ENCODE measurements at regions of chr1 and their contacts with region 1.

Region 1: DNA sequence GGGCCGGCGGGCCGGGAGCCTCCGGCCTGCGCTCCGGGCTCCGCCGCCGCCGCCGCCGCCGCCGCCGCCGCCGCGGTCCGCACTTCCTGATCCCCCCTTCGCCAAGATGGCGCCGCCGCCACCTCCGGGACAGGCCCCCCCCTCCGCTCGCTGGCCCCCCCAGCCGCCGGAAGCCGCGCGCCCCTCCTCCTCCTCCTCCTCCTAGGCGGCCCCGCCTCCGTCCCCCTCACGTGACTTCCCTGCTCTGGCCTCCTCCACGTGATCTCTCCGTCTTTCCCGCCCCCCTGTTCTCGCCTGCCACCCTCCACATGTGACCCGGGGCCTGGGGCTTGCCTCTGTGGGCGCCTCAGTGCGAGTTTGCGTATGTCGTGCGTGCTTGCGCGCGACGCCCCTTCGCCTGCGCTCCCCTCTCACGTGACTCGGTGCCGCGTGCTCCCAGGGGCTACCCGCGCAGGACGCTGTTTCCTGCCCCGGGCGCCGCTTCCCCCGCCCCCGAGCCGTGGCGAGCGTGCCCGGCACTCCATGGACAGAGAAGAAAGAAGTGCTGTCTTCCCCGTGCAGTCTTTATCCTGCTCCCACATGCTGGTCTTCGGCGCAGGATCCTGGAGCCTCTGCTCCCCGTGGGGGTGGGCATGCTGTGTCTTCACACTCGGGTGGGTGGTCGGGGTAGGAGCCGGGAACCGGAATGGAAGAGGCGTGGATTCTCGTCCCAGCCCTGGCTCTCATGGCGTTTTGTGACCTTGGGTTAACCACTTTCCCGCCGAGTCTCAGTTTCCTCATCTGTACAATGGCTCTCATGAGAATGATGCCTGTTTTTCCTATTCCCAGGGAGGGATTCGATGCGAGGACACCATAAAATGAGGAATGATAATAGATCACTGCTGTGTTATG is at the start of gene UBE2Q1:
- DNase-seq: peak; percentile 97
- ATAC-seq: peak; percentile 97
- H3K4me3 ChIP-seq: peak within 1 kb of the TSS; percentile 88
- H3K27ac ChIP-seq: peak within 1 kb of the TSS; percentile 88
- H3K4me1 ChIP-seq: peaks cover 4% of the 10 kb centered on the region
- H3K27me3 ChIP-seq: no peaks in the 10 kb centered on the region
- CTCF ChIP-seq: no peak
- EP300 ChIP-seq: no peak; a peak in 1 of 4 replicates
- POLR2A ChIP-seq: peak; percentile 77
- RAD21 ChIP-seq: no peak
- polyA plus RNA-seq, gene UBE2Q1: 11.0 to 20.3 TPM

Region 2: GRCh38 chr1:154361357-154361756 is 197.5 kb before region 1 on chr1:
- CTCF ChIA-PET with region 1: no interaction called
- POLR2A ChIA-PET with region 1: interaction called, 12 read pairs
- RAD21 ChIA-PET with region 1: no interaction called
- SMC1A ChIA-PET with region 1: no interaction called
- in situ Hi-C with region 1: no loop called
- intact Hi-C with region 1: no loop called
- DNase-seq: no peak
- ATAC-seq: no peak
- H3K4me3 ChIP-seq: no peak overlapping the region
- H3K27ac ChIP-seq: no peak overlapping the region
- H3K4me1 ChIP-seq: no peaks in the 10 kb centered on the region
- H3K27me3 ChIP-seq: peaks cover 0 to 3% of the 10 kb centered on the region in 2 experiments; a peak in 1 of 4 replicates
- CTCF ChIP-seq: no peak
- EP300 ChIP-seq: no peak
- POLR2A ChIP-seq: no peak
- RAD21 ChIP-seq: no peak

Region 3: GRCh38 chr1:154386643-154387352 is 172.0 kb before region 1 on chr1:
- CTCF ChIA-PET with region 1: no interaction called
- POLR2A ChIA-PET with region 1: no interaction called
- RAD21 ChIA-PET with region 1: no interaction called
- SMC1A ChIA-PET with region 1: no interaction called
- in situ Hi-C with region 1: no loop called
- intact Hi-C with region 1: no loop called
- DNase-seq: no peak
- ATAC-seq: peak; percentile 91
- H3K4me3 ChIP-seq: no peak overlapping the region
- H3K27ac ChIP-seq: no peak overlapping the region
- H3K4me1 ChIP-seq: no peaks in the 10 kb centered on the region; the same call in 1 of the 2 replicates
- H3K27me3 ChIP-seq: no peaks in the 10 kb centered on the region
- CTCF ChIP-seq: no peak
- EP300 ChIP-seq: no peak
- POLR2A ChIP-seq: no peak
- RAD21 ChIP-seq: no peak

Region 4: GRCh38 chr1:154578058-154578418 is 19.2 kb after region 1 on chr1:
- CTCF ChIA-PET with region 1: interaction called, 23 read pairs
- POLR2A ChIA-PET with region 1: interaction called, 3 read pairs
- RAD21 ChIA-PET with region 1: no interaction called
- SMC1A ChIA-PET with region 1: interaction called, 8 read pairs
- in situ Hi-C with region 1: no loop called
- intact Hi-C with region 1: no loop called
- DNase-seq: no peak
- ATAC-seq: no peak
- H3K4me3 ChIP-seq: no peak overlapping the region
- H3K27ac ChIP-seq: no peak overlapping the region
- H3K4me1 ChIP-seq: no peaks in the 10 kb centered on the region
- H3K27me3 ChIP-seq: no peaks in the 10 kb centered on the region
- CTCF ChIP-seq: no peak
- EP300 ChIP-seq: no peak
- POLR2A ChIP-seq: 0 out of 2 replicates have a peak, but pooled peaks have one; percentile 5
- RAD21 ChIP-seq: no peak

Region 5: GRCh38 chr1:154627257-154628120 is 68.7 kb after region 1 on chr1:
- CTCF ChIA-PET with region 1: interaction called, 11 read pairs
- POLR2A ChIA-PET with region 1: interaction called, 6 read pairs
- RAD21 ChIA-PET with region 1: interaction called, 6 read pairs
- SMC1A ChIA-PET with region 1: interaction called, 5 read pairs
- in situ Hi-C with region 1: no loop called
- intact Hi-C with region 1: no loop called
- DNase-seq: no peak
- ATAC-seq: peak; percentile 74
- H3K4me3 ChIP-seq: peak overlapping the region; percentile 82
- H3K27ac ChIP-seq: peak overlapping the region; percentile 94
- H3K4me1 ChIP-seq: peaks cover 3% of the 10 kb centered on the region; the same call in 1 of the 2 replicates
- H3K27me3 ChIP-seq: no peaks in the 10 kb centered on the region
- CTCF ChIP-seq: no peak
- EP300 ChIP-seq: peak in 1 of 2 experiments; percentile 15; a peak in 1 of 4 replicates
- POLR2A ChIP-seq: peak; percentile 55; the same call in 1 of the 2 replicates
- RAD21 ChIP-seq: no peak

Region 6: DNA sequence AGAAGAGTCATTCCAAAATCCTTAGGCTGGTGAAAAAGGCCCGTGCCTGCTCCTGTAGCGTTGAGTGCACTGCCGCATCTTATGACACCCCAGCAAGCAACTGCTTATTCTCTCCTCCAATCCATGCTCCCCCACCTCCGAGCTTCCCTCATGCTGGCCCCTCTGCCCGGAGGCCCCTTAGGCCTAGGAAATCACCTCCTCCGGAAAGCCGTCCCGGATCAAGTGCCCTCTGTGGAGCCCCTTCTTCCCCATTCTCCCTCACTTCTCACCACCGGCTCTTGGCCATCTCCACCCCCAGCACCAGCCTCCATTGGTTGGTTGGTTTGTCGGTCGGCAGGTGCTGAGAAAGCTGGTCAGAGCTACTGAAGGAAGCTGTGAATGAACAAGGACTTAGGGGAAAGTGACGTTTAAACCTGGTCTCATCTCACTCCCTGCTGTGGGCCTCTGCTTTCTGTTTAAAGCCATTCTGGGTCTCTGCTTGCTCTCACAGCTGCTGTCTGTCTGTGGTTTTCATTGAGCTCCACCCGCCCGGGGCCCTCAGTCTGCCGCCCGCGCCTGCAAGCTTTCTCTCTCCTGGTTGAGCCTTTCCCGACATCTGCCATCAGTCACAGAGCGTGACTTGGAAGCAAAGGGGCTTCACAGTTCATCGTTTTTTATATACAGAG is 189.1 kb after region 1 on chr1:
- CTCF ChIA-PET with region 1: interaction called, 8 read pairs
- POLR2A ChIA-PET with region 1: interaction called, 3 read pairs
- RAD21 ChIA-PET with region 1: interaction called, 9 read pairs
- SMC1A ChIA-PET with region 1: interaction called, 3 read pairs
- in situ Hi-C with region 1: no loop called
- intact Hi-C with region 1: loop called (anchors 5 kb)
- DNase-seq: peak; percentile 66
- ATAC-seq: peak; percentile 89
- H3K4me3 ChIP-seq: peak overlapping the region; percentile 34; the same call in 1 of the 2 replicates
- H3K27ac ChIP-seq: peak overlapping the region; percentile 67
- H3K4me1 ChIP-seq: peaks cover 48% of the 10 kb centered on the region
- H3K27me3 ChIP-seq: no peaks in the 10 kb centered on the region
- CTCF ChIP-seq: no peak
- EP300 ChIP-seq: no peak
- POLR2A ChIP-seq: no peak
- RAD21 ChIP-seq: no peak

Region 7: DNA sequence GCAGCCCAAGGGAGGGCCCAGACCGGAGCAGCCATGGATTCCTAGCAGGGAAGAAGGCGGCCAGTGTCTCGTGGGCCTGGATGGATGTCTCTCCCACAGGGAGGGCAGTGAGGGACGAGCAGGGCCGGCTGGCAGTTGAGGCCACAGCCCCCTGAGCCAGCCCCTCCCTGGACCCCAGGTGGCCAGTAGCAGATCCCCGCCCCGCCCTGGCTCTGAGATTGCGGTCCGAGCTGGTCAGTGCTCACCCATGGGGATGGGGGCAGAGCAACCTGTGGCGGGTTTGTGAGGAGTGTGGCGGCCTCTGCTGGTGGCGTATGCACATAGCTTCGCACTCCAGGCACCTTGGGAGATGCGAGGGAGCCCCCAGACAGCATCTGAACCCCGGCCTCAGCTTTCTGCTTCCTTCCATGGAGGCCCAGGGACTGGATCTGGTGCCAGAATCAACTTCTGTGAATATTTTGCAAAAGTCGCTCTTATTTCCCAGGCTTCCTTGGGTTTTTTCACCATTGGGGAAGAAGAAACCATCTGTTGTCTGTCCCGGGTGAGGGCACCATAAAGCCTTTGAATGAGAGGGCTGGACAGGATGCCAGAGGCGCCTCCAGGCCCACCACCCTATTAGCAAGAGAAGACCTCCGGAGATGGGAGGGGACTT is 319.7 kb after region 1 on chr1:
- CTCF ChIA-PET with region 1: interaction called, 64 read pairs
- POLR2A ChIA-PET with region 1: interaction called, 3 read pairs
- RAD21 ChIA-PET with region 1: interaction called, 44 read pairs
- SMC1A ChIA-PET with region 1: interaction called, 45 read pairs
- in situ Hi-C with region 1: no loop called
- intact Hi-C with region 1: loop called (anchors 1 kb)
- DNase-seq: no peak
- ATAC-seq: peak; percentile 94
- H3K4me3 ChIP-seq: no peak overlapping the region
- H3K27ac ChIP-seq: no peak overlapping the region
- H3K4me1 ChIP-seq: peaks cover 10% of the 10 kb centered on the region
- H3K27me3 ChIP-seq: no peaks in the 10 kb centered on the region
- CTCF ChIP-seq: peak; percentile 92 to 97 (median 94)
- EP300 ChIP-seq: no peak
- POLR2A ChIP-seq: no peak
- RAD21 ChIP-seq: peak; percentile 96

Region 8: DNA sequence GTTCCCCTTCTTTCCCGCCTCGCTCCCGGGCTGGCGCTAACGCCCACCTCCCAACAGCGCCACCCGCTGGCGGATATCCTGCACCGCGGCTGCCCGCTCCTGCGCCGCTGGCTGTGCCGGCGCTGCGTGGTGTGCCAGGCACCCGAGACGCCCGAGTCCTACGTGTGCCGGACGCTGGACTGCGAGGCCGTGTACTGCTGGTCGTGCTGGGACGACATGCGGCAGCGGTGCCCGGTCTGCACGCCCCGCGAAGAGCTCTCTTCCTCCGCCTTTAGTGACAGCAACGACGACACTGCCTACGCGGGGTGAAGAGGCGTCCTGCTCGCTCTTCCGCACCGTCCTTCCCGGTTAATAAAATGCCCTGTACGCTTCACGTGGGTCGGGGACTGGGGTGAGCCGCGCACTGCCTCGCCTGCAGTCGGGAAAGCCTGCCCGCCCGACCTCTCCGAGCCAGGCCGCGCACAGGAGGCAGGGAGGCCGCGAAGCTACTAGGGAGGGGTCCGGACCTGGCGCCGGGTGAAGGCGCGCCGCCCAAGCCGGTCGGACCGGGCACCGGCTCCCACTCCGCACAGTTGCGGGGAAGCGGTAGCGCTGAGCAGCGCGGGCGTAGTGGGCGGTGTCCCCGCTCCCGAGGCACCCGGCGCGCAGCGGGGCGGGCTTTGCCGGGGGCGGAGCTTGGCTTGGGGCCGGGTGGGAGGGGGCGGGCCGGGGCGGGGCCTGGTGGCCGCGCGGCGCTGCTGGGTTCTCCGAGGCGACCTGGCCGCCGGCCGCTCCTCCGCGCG is 491.9 kb after region 1 on chr1 and contains the start of gene ADAM15:
- CTCF ChIA-PET with region 1: interaction called, 12 read pairs
- POLR2A ChIA-PET with region 1: no interaction called
- RAD21 ChIA-PET with region 1: no interaction called
- SMC1A ChIA-PET with region 1: interaction called, 3 read pairs
- in situ Hi-C with region 1: no loop called
- intact Hi-C with region 1: no loop called
- DNase-seq: no peak
- ATAC-seq: peak; percentile 89
- H3K4me3 ChIP-seq: peak within 1 kb of the TSS; percentile 91
- H3K27ac ChIP-seq: peak within 1 kb of the TSS; percentile 15; the same call in 1 of the 2 replicates
- H3K4me1 ChIP-seq: peaks cover 13% of the 10 kb centered on the region
- H3K27me3 ChIP-seq: no peaks in the 10 kb centered on the region
- CTCF ChIP-seq: peak; percentile 91 to 92 (median 91)
- EP300 ChIP-seq: no peak
- POLR2A ChIP-seq: peak; percentile 51; the same call in 1 of the 2 replicates
- RAD21 ChIP-seq: peak; percentile 35; the same call in 1 of the 2 replicates
- polyA plus RNA-seq, gene ADAM15: 0.29 to 0.79 TPM